ENCODE measurements at regions of chr3 and their contacts with region 1.

Region 1: DNA sequence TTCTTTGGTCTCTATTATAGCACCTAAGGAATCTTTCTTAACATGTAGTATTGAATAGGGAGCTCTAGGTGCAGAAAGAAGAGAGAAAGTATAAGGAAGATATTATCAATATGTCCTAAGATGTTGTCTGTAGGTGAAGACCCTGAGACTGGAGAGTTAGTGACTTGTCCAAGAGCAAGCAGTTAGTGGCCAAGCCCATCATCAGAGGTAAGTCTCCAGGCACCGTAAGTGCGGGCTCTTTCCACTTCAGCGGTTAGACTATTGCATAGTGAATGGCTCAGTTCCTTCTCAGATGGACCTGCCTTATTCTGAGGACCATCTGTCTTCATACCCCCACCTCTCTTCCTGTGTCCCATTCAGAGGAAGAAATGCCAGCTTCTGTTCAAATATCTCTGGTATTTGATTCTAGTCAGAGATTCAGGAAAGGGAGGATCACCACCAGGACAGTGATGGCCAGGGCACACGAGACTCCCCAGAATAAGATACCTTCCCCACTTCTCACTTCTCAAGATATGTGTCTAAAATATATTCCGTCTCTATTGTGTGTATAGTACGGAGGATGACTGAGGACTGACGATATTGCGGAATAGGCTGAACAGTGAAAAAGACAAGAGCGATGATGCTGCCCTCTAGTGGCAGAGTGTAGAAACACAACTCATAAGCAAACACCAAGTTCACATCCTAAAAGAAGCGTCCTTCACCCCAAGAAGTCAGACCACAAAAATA is 19.1 kb upstream of the ADGRG7 start:
- DNase-seq: peak; percentile 49 to 73
- ATAC-seq: peak; percentile 86 to 92
- H3K4me3 ChIP-seq: peak overlapping the region; percentile 23; the same call in 1 of the 3 replicates
- H3K27ac ChIP-seq: peak overlapping the region in 1 of 2 experiments; percentile 53; a peak in 1 of 6 replicates
- H3K4me1 ChIP-seq: peaks cover 13% of the 10 kb centered on the region
- CTCF ChIP-seq: peak; percentile 93
- EP300 ChIP-seq: no peak
- POLR2A ChIP-seq: no peak
- RAD21 ChIP-seq: peak; percentile 84 to 85

Region 2: GRCh38 chr3:100245927-100246326 is 344.4 kb before region 1 on chr3:
- CTCF ChIA-PET with region 1: no interaction called
- POLR2A ChIA-PET with region 1: no interaction called
- DNase-seq: no peak
- ATAC-seq: no peak
- H3K4me3 ChIP-seq: no peak overlapping the region
- H3K27ac ChIP-seq: no peak overlapping the region
- H3K4me1 ChIP-seq: no peaks in the 10 kb centered on the region
- CTCF ChIP-seq: no peak
- EP300 ChIP-seq: no peak
- POLR2A ChIP-seq: no peak
- RAD21 ChIP-seq: no peak

Region 3: DNA sequence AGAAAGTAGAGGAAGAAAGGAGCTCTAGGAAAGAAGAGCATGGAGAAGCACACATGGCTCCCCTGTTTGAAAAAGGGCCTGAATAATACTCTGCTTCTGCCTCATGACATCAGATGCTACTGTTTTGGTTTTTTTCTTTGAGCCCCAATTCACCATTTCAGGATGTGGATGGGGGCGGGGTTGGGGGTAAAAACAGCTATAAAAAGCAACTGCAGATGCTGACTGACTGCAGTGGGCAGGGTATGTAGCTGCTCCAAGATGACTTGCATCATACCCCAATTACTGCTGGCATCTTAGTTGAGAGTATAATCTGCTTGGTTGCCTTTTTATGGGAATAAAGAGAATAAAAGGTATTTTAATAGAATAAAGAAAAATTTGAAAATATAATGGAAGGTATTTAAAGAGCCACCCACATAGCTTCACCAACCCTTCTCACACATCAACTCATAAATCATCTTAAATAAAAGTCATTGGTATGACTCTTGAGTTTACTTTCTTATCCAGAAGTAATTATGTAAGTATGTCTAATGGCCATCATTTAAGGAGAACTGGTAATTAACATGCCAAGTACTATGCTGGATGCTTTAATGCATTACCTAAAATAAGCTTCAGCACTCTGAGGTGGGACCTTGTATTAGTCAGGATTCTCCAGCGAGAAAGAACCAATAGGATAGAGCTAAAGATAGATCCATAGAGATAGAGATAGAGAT is 134.3 kb before region 1 on chr3:
- CTCF ChIA-PET with region 1: interaction called, 130 read pairs
- POLR2A ChIA-PET with region 1: no interaction called
- DNase-seq: no peak
- ATAC-seq: no peak
- H3K4me3 ChIP-seq: no peak overlapping the region
- H3K27ac ChIP-seq: no peak overlapping the region
- H3K4me1 ChIP-seq: no peaks in the 10 kb centered on the region
- CTCF ChIP-seq: no peak
- EP300 ChIP-seq: no peak
- POLR2A ChIP-seq: no peak
- RAD21 ChIP-seq: no peak

Region 4: DNA sequence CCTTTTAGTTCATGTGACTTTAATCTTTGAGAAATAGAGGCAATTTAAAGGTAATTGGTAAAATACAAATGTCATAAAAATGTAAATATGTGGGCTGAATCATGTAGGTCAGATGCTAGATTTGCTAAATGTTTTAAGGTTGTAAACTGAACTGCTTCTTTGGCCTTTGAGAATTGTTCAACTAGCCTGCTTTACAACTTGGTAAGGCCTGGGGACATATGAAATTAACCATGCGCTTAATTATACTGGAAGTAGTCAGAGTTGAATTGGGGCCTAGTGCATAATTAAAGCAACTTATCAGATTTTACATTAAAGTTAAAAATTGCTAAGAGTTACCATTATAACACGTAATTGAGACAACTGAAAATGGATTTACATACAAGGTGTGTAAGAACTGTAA is 118.8 kb before region 1 on chr3:
- CTCF ChIA-PET with region 1: interaction called, 24 read pairs
- POLR2A ChIA-PET with region 1: no interaction called
- DNase-seq: no peak
- ATAC-seq: no peak
- H3K4me3 ChIP-seq: no peak overlapping the region
- H3K27ac ChIP-seq: no peak overlapping the region
- H3K4me1 ChIP-seq: no peaks in the 10 kb centered on the region
- CTCF ChIP-seq: no peak
- EP300 ChIP-seq: no peak
- POLR2A ChIP-seq: no peak
- RAD21 ChIP-seq: no peak

Region 5: GRCh38 chr3:100603469-100603868 is 13.2 kb after region 1 on chr3:
- CTCF ChIA-PET with region 1: interaction called, 15 read pairs
- POLR2A ChIA-PET with region 1: no interaction called
- DNase-seq: peak; percentile 27 to 59
- ATAC-seq: peak; percentile 94 to 96
- H3K4me3 ChIP-seq: no peak overlapping the region
- H3K27ac ChIP-seq: peak overlapping the region; percentile 33 to 58; a peak in 4 of 6 replicates
- H3K4me1 ChIP-seq: peaks cover 19% of the 10 kb centered on the region
- CTCF ChIP-seq: peak; percentile 41; the same call in 2 of the 3 replicates
- EP300 ChIP-seq: no peak
- POLR2A ChIP-seq: no peak
- RAD21 ChIP-seq: peak; percentile 60 to 62